Activated CD4-positive, alpha-beta T cell treated with anti-CD3 and anti-CD28 coated beads, Interleukin-2, amount 10 ng/mL, durations not matched to agents 24 days and 14 days (primary cell): ENCODE measurements at regions of chrX and their contacts with region 1.

Region 1: DNA sequence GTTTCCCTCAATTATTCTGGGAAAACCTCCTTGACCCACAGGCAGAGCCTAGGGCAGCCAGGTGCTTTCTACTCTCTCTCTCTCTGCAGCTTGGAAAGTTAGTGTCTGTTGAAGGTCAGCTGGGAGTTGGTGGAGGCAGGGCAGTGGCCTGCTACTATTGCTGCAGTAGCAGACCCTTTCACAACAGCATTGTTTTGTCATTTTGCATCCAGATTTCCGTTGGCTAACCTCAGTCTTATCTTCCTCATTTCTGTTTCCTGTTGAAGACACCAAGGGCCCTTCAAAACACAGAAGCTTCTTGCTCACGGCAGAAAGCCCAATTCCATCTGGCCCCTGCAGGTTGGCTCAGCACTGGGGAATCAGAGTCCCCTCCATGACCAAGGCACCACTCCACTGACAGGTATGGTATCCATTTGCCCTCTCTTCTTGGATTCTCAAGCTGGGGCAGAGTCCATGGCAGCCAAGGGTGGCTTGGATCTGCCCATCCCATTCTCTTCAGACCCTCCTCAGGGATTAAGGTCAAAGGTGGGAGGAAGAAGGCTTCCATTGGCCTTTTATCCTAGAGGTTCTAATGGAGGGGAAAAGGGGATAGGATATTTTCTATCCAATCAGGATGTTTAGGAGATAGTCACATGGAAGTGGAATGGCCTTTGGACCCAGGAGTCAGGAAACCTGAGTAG is 24.6 kb downstream of the VSIG4 start:
- DNase-seq: peak; percentile 78
- H3K4me3 Mint-ChIP-seq: peak overlapping the region; percentile 64
- H3K27ac Mint-ChIP-seq: peak overlapping the region; percentile 77
- H3K4me1 Mint-ChIP-seq: peaks cover 65% of the 10 kb centered on the region
- H3K27me3 Mint-ChIP-seq: no peaks in the 10 kb centered on the region

Region 2: GRCh38 chrX:66200855-66201795 is 185.8 kb after region 1 on chrX:
- intact Hi-C with region 1: loop called (anchors 10 kb)
- DNase-seq: no peak
- H3K4me3 Mint-ChIP-seq: peak overlapping the region; percentile 9
- H3K27ac Mint-ChIP-seq: no peak overlapping the region
- H3K4me1 Mint-ChIP-seq: peaks cover 23% of the 10 kb centered on the region
- H3K27me3 Mint-ChIP-seq: no peaks in the 10 kb centered on the region

Region 3: DNA sequence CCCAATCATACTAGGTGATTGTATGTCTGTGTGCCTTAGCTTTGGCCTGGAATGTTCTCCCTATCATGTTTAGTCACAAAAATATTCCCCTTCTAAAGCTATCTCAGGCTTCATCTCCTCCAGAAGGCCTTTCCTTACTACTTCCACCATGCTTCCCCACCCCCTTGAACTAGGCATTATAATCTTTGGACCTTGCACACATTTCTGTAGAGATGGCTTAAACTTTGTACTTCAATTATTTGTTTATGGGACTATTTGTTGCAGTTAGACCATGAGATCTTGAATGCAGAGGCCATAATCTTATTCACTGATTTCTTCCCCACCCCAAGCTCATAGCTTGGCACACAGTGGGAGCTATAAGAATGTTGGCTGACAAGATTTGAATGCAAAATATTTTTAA is 885.6 kb after region 1 on chrX:
- intact Hi-C with region 1: no loop called
- DNase-seq: no peak
- H3K4me3 Mint-ChIP-seq: no peak overlapping the region
- H3K27ac Mint-ChIP-seq: no peak overlapping the region
- H3K4me1 Mint-ChIP-seq: no peaks in the 10 kb centered on the region
- H3K27me3 Mint-ChIP-seq: no peaks in the 10 kb centered on the region